Gastrocnemius medialis (tissue), 4 donors: ENCODE measurements at regions of chr14 and their contacts with region 1.

Region 1: GRCh38 chr14:89416002-89416995 is 734 bp downstream of the FOXN3 start:
- DNase-seq: peak; percentile 98 to 100
- ATAC-seq: peak; percentile 74 to 80
- H3K4me3 ChIP-seq: peak overlapping the region; percentile 77 to 100 (median 95)
- H3K27ac ChIP-seq: peak overlapping the region; percentile 95 to 100 (median 99)
- H3K4me1 ChIP-seq: peaks cover 19 to 22% of the 10 kb centered on the region in 2 donors
- H3K27me3 ChIP-seq: no peaks in the 10 kb centered on the region
- CTCF ChIP-seq: peak in 1 of 5 experiments; percentile 21
- POLR2A ChIP-seq: peak; percentile 77 to 97

Region 2: DNA sequence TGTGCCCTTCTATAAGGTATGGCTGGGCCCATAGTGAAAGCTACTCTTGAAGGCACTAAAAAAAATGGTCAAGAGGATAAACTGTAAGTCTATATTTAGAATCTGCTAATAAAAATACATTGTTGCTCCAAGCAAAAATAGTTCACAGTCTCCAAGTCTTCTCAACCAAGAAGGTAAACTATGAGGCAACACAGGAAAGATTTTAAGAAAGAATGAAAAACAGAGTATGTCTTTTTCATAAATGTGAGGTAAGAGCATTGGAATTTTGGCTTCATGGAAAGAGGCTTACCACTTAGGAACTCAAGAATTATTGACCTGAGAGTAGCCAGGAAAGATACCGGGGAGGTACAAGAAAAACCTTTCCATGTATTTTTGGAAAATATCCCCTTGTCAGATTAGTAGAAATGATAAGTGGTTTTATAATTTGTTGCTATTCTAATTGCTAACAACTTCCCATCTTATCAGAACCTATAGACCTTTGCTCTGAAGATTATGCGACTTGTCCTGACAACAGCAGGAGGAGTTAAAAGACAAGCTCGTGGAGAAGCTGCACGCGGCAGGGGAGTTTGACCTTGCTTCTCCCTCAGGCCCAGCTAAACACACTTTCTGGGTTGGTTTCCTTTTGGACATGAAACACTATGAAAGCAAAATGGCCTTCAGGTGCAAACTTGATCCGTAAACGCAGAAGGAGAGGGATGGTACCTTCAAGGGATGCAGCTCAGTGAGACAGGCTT is 237.3 kb before region 1 on chr14:
- in situ Hi-C with region 1: loop called in 3 of 4 experiments (anchors 10 kb)
- intact Hi-C with region 1: loop called (anchors 2 kb)
- DNase-seq: no peak
- ATAC-seq: no peak
- H3K4me3 ChIP-seq: no peak overlapping the region
- H3K27ac ChIP-seq: no peak overlapping the region
- H3K4me1 ChIP-seq: peaks cover 32 to 46% of the 10 kb centered on the region in 2 donors
- H3K27me3 ChIP-seq: no peaks in the 10 kb centered on the region
- CTCF ChIP-seq: no peak
- POLR2A ChIP-seq: no peak

Region 3: GRCh38 chr14:89252887-89253547 is 163.3 kb before region 1 on chr14:
- in situ Hi-C with region 1: no loop called
- intact Hi-C with region 1: loop called (anchors 1 kb)
- DNase-seq: peak in 1 of 2 donors; percentile 36
- ATAC-seq: peak; percentile 37 to 39
- H3K4me3 ChIP-seq: no peak overlapping the region
- H3K27ac ChIP-seq: peak overlapping the region in 2 of 4 donors; percentile 41 to 50
- H3K4me1 ChIP-seq: peaks cover 55 to 65% of the 10 kb centered on the region in 2 donors
- H3K27me3 ChIP-seq: no peaks in the 10 kb centered on the region
- CTCF ChIP-seq: peak in 3 of 5 experiments; percentile 28 to 47 (median 30)
- POLR2A ChIP-seq: no peak

Region 4: DNA sequence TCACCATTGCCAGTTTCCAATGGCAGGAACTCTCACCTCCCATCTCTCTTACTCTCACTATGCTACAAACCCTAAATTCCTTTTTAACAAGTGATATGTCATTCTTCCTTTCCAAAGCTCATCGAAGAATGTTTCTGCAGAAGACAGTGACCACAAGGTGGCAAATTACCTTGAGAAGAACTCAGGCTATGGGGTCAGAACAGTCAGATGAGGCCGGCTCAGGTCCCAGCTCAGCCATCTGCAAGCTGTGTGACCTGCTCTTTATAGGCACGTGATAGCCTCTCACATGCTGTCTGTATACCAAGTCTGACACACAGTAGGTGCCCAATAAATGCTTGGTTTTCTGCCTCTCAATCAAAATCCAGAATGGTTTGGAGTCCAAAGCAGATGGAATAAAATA is 80.0 kb before region 1 on chr14:
- in situ Hi-C with region 1: no loop called
- intact Hi-C with region 1: loop called (anchors 5 kb)
- DNase-seq: no peak
- ATAC-seq: peak in 1 of 2 donors; percentile 13
- H3K4me3 ChIP-seq: no peak overlapping the region
- H3K27ac ChIP-seq: no peak overlapping the region
- H3K4me1 ChIP-seq: peaks cover 48 to 51% of the 10 kb centered on the region in 2 donors
- H3K27me3 ChIP-seq: no peaks in the 10 kb centered on the region
- CTCF ChIP-seq: no peak
- POLR2A ChIP-seq: no peak

Region 5: GRCh38 chr14:89618811-89619551 is 202.7 kb after region 1 on chr14:
- in situ Hi-C with region 1: no loop called
- intact Hi-C with region 1: loop called (anchors 1 kb)
- DNase-seq: peak; percentile 53 to 74
- ATAC-seq: peak; percentile 72 to 77
- H3K4me3 ChIP-seq: peak overlapping the region; percentile 65 to 73 (median 72)
- H3K27ac ChIP-seq: peak overlapping the region; percentile 78 to 87 (median 85)
- H3K4me1 ChIP-seq: peaks cover 36 to 39% of the 10 kb centered on the region in 2 donors
- H3K27me3 ChIP-seq: no peaks in the 10 kb centered on the region
- CTCF ChIP-seq: no peak
- POLR2A ChIP-seq: peak; percentile 48 to 57

Region 6: GRCh38 chr14:89660166-89660565 is 243.9 kb after region 1 on chr14:
- in situ Hi-C with region 1: no loop called
- intact Hi-C with region 1: no loop called
- DNase-seq: peak; percentile 51 to 52
- ATAC-seq: peak; percentile 96 to 97
- H3K4me3 ChIP-seq: peak overlapping the region; percentile 12 to 36 (median 24)
- H3K27ac ChIP-seq: peak overlapping the region; percentile 73 to 87 (median 80)
- H3K4me1 ChIP-seq: peaks cover 14 to 18% of the 10 kb centered on the region in 2 donors
- H3K27me3 ChIP-seq: no peaks in the 10 kb centered on the region
- CTCF ChIP-seq: no peak
- POLR2A ChIP-seq: no peak

Region 7: DNA sequence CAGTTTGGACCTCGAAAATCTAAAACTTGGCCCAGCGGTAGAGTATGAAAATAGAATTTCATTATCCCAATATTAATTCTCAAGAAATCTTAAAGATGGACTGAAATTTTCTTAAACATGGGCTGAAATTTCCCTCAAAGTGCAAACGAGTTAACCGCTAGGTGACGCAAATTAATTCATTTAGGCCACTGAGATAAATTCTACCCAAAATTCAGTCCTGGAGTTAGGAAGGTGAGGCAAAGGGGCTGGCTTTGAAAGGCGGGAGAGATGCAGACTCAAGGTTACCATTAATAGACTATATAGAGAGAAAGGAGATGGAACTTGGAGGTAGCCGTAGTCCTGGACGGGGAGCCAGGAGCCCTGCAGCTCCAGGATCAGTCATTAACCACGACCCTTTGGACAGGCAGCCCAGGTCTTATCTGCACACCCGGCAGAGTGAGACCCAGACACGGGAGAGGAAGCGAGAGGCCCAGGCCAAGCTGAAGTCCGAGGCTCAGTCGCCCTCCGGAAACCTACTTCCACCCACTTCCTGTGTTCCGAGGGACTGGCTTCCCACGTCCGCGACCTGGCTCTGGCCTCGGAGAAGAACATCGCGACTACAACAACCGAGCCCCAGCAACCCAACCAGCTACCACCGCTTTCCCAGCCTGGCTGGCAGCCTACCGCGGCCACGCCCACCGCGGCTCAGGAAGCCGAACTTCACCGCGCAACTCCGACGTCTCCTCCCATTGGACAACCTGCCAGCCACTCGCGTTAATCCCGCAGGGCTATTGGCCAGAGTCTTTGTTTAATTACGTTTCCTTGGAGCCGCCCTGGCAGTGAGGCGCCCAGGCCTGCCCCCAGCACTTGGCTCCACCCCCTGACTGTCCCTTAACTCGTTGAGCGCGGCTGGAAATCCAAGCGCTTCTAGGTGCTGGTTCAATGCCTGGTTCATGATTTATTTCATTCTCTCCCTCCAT is 538.0 kb after region 1 on chr14 and contains the start of gene EFCAB11:
- in situ Hi-C with region 1: no loop called
- intact Hi-C with region 1: loop called (anchors 5 kb)
- DNase-seq: peak; percentile 96 to 98
- ATAC-seq: peak; percentile 90 to 91
- H3K4me3 ChIP-seq: peak within 1 kb of the TSS; percentile 63 to 99 (median 73)
- H3K27ac ChIP-seq: peak within 1 kb of the TSS; percentile 82 to 87 (median 84)
- H3K4me1 ChIP-seq: peaks cover 10 to 13% of the 10 kb centered on the region in 2 donors
- H3K27me3 ChIP-seq: no peaks in the 10 kb centered on the region
- CTCF ChIP-seq: no peak
- POLR2A ChIP-seq: no peak
- total RNA-seq, gene EFCAB11: 0.69 to 1.6 (median 1.6) TPM